ENCODE measurements at regions of chr5 and their contacts with region 1.

Region 1: GRCh38 chr5:8644377-8644776 is 775.4 kb downstream of the MTRR start:
- DNase-seq: no peak
- H3K4me3 ChIP-seq: no peak overlapping the region
- H3K27ac ChIP-seq: no peak overlapping the region
- H3K4me1 ChIP-seq: no peaks in the 10 kb centered on the region
- H3K27me3 ChIP-seq: no peaks in the 10 kb centered on the region
- CTCF ChIP-seq: no peak
- EP300 ChIP-seq: no peak
- POLR2A ChIP-seq: no peak

Region 2: DNA sequence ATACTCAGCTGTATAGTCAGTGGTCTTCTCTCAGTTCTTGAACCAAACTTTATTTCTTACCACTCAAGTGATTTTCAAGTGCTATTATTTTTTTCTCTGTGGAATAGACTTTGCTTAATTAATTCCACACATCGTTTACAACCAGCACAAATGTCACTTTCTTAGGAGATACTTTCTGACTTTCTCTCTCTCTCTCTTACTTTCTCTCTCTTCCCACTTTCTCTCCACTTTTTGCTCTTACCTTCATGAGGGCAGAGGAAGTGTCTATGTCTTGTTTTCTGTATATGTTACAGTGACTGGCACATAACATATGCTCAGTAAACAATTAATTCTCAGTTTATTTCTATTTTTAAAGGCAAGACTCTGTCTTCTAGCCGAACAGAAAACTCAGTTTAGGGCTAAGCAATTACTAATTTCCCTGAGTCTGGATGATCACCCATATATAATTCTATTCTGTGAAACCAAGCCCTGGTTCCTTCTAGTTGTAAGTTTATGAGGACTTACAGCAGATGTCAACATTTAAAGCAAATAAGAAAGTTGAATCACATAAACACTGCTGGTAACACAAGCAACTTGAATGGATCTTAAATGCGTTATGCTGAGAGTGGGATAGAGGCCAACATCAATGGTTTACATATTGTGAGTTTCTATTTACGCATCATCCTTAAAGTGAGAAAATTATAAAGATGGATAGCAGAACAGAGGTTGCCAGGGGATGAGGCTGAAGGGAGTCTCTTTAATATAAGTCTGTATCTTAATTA is 15.9 kb after region 1 on chr5:
- in situ Hi-C with region 1: no loop called
- intact Hi-C with region 1: loop called (anchors 2 kb)
- DNase-seq: no peak
- H3K4me3 ChIP-seq: no peak overlapping the region
- H3K27ac ChIP-seq: no peak overlapping the region
- H3K4me1 ChIP-seq: no peaks in the 10 kb centered on the region
- H3K27me3 ChIP-seq: no peaks in the 10 kb centered on the region
- CTCF ChIP-seq: no peak
- EP300 ChIP-seq: no peak
- POLR2A ChIP-seq: no peak